ENCODE measurements at regions of chr11 and their contacts with region 1.

Region 1: DNA sequence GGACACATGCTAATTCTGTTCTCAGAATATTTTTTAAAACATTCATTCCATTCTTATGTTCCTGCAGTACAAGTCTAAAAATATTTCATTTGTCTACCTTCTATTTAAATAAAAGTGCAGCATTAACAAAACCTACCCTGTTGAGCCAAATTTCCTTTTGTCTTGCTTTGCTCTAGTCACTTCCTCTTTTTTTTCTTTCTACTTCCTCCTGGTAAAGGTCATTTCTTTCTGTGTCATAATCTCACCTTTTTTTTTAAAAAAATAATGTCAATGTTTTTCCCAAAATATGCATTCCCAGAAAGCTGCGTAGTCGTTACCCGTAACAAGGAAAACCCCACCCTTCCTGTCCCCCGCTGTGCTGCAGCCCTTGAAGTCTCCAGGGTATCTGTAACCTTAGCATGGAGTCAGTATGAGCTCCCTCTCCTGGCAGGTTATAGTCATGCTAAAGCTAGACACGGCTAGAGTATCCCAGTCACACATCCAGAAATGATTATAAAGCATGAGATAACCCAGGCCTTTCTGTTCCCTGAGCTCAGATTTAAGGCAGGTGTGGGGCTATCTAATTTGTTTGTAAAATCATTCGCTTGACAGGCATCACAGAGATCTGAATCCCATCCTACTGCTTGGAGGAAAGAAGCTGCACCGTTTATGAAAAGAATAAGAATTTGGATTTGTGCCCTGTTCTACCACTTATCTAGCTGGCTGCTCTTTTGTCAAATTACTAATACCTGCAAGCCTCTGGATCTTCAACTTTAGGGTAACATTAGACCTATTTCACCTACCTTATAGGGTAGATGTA is 51.1 kb upstream of the EED start:
- DNase-seq: peak; percentile 86
- ATAC-seq: peak; percentile 100
- H3K4me3 ChIP-seq: peak overlapping the region; percentile 20 to 32; a peak in 3 of 4 replicates
- H3K27ac ChIP-seq: no peak overlapping the region
- H3K4me1 ChIP-seq: peaks cover 4 to 22% of the 10 kb centered on the region in 2 experiments; a peak in 3 of 4 replicates
- H3K27me3 ChIP-seq: no peaks in the 10 kb centered on the region
- CTCF ChIP-seq: peak; percentile 80 to 85 (median 84); a peak in 5 of 6 replicates
- POLR2A ChIP-seq: no peak
- RAD21 ChIP-seq: peak; percentile 86

Region 2: DNA sequence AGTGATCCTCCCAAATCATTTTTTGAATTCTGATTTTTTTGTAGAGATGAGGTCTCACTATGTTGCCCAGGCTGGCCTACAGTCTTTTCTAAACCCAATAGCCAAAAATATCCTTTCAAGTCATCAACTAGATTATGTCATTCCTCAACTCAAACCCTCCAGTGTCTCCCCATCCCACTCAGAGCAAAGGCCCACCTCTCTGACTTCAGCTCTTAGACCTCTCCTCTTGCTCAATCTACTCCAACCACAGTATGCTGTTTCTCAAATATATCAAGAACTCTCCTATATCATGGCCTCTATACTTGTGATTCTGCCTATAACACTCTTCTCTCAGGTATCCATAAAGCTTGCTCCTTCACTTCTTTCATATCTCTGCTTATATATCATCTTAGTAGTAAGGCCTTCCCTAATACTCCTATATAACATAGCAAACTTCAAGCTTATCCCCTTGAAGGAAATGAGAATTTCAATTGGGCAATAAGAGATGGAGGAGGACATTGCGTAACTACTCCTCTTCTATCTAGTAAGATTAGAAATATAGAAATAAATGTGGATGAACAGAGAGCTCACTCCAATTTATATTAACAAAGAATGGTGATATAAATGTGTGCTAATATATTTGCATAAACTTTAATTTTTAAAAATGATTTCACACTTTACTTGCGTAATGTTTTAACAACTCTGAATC is 590.8 kb before region 1 on chr11:
- CTCF ChIA-PET with region 1: no interaction called
- POLR2A ChIA-PET with region 1: no interaction called
- RAD21 ChIA-PET with region 1: no interaction called
- intact Hi-C with region 1: loop called (anchors 10 kb)
- DNase-seq: no peak
- ATAC-seq: no peak
- H3K4me3 ChIP-seq: no peak overlapping the region
- H3K27ac ChIP-seq: no peak overlapping the region
- H3K4me1 ChIP-seq: no peaks in the 10 kb centered on the region
- H3K27me3 ChIP-seq: no peaks in the 10 kb centered on the region
- CTCF ChIP-seq: no peak
- POLR2A ChIP-seq: no peak
- RAD21 ChIP-seq: no peak

Region 3: DNA sequence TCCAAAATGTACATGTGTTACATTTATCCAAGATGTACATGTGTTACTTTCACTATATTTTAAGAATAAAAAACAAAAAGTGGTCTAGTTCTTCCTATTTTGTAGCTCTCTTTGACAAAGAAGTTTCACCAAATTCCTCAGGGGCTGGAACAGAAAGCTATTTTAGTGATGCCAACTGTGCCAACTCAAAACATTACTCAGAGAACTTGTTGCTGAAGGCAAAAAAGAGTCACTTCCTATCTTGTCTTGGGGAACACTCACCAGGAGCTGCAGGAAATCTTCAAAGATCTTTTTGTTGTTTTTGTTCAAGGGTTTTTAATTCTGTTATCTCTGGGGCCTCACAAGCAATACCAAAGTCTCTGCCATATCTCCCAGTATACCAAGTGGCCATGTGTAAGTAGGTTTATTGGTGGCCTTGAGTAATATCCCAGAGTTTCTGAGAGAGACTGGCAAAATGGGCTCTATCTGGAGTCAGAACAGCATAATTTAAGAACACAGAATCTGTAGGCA is 37.5 kb after region 1 on chr11:
- CTCF ChIA-PET with region 1: interaction called, 10 read pairs
- POLR2A ChIA-PET with region 1: no interaction called
- RAD21 ChIA-PET with region 1: no interaction called
- intact Hi-C with region 1: no loop called
- DNase-seq: no peak
- ATAC-seq: no peak
- H3K4me3 ChIP-seq: no peak overlapping the region
- H3K27ac ChIP-seq: no peak overlapping the region
- H3K4me1 ChIP-seq: peaks cover 5 to 26% of the 10 kb centered on the region in 2 experiments
- H3K27me3 ChIP-seq: no peaks in the 10 kb centered on the region
- CTCF ChIP-seq: no peak
- POLR2A ChIP-seq: no peak
- RAD21 ChIP-seq: no peak

Measured in HCT116 (cell line).